ENCODE measurements at regions of chr18 and their contacts with region 1.

Region 1: DNA sequence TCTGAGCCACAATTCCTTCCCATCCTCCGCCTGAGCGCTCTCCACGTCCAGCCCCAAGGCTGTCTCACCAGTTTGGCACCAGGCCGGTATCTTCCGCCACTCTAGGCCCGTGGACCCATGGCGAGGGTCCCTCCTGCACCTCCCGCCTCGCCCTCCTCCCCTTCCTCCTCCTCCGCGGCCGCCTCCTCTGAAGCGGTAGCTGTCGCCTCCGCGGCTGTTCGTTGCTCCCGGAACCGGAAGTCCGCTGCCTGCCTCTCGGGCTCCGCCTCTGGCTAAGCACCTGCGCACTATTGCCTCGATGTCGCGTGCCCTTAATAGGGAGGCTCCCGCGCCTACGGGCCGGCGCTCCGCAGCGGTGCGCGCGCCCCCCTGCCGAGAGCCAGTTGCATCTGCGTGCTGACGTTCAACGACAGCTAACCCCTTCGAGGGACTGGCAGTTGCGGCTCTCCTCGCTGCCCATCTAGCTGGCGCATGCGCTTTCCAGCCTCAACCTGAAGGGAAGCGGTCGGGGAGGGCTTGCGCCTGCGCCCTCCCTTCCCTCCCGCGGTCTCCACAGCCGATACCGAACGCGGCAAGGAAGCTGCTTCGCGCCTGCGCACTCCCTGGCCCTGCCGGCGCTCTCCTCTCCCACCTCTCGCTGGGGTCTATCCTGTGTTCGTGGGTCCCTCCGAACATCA is at the start of gene MBD1:
- DNase-seq: peak; percentile 90
- ATAC-seq: peak; percentile 94
- H3K4me3 Mint-ChIP-seq: peak within 1 kb of the TSS; percentile 97
- H3K27ac Mint-ChIP-seq: peak within 1 kb of the TSS; percentile 93
- H3K4me1 Mint-ChIP-seq: peaks cover 38% of the 10 kb centered on the region
- H3K27me3 Mint-ChIP-seq: no peaks in the 10 kb centered on the region
- CTCF ChIP-seq: no peak
- total RNA-seq, gene MBD1: 101 and 117 TPM in 2 replicates

Region 2: GRCh38 chr18:49878567-49879270 is 402.7 kb before region 1 on chr18:
- CTCF ChIA-PET with region 1: no interaction called
- POLR2A ChIA-PET with region 1: no interaction called
- intact Hi-C with region 1: no loop called
- DNase-seq: no peak
- ATAC-seq: no peak
- H3K4me3 Mint-ChIP-seq: no peak overlapping the region
- H3K27ac Mint-ChIP-seq: no peak overlapping the region
- H3K4me1 Mint-ChIP-seq: no peaks in the 10 kb centered on the region
- H3K27me3 Mint-ChIP-seq: peaks cover 12% of the 10 kb centered on the region
- CTCF ChIP-seq: no peak

Region 3: DNA sequence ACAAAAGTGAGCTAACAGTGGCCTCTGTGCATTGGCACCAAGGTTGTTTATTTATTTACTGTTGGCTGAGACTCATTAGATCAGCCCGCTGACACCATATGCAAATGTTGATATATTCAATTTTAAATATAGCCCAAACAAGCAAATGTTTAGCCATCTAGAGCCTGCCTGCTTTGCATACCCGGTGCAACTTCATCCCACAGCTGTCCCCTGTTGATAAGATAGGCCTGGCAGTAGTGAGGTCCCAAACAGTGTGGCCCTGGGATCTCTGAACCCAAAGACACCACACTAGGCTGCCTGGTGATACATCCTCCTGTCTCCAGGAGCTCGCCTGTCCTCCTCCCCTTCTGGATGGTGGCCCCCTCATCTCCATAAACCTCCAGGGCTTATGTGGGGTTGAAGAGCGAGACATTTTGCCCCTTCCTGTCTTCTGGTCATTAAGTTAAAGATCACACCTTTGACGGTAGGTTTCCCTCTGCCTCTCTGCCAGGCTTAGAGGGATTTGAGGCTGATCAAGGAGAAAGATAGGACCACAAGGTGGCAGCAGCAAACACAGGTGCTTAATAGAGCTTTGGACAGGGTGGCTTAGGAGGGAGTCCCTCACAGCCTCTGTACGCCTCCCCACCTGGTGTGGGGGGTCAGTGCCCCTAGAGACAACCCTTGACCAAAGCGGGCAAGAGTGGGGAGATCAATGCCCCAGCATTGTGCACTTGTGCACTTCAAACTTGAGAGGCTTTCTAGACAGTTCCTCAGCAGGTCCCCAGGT is 62.8 kb before region 1 on chr18:
- CTCF ChIA-PET with region 1: interaction called, 4 read pairs
- POLR2A ChIA-PET with region 1: no interaction called
- intact Hi-C with region 1: loop called (anchors 1 kb)
- DNase-seq: peak; percentile 16
- ATAC-seq: peak; percentile 60
- H3K4me3 Mint-ChIP-seq: no peak overlapping the region
- H3K27ac Mint-ChIP-seq: no peak overlapping the region
- H3K4me1 Mint-ChIP-seq: peaks cover 4% of the 10 kb centered on the region
- H3K27me3 Mint-ChIP-seq: peaks cover 25% of the 10 kb centered on the region
- CTCF ChIP-seq: no peak

Region 4: DNA sequence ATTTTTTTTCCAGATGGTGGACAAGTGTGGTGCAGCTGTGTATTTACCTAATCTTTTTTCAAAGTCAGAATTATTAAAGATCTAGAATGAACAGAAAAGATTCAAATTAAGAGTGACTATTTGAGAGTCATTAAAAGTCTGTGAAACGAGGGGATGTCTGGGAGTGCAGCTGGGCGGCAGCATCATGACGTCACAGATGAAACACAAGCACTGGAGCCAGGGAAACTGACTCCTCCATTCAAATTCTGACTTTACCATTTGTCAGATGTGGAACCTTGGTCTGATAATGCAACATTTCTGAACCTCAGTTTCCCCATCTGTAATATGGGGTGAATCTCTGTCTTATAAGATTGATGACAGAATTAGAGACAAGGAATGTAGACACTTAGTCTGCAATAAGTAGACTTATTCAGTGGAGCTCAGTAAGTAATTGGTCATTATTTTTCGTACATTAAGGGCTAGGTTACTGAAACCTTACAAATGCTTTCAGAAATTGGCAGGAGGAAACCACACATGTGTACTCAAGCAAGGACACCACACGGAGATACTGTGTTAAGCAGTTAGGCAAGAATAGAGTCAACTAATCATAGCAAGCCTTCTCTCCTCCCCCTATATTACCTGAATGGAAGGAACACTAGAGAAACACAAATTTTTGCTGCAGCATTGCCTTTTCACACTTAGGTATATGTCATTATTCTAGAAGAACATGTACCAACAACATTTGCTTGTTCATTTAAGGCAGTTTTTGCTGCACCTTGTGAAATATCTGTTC is 33.9 kb after region 1 on chr18:
- CTCF ChIA-PET with region 1: no interaction called
- POLR2A ChIA-PET with region 1: interaction called, 3 read pairs
- intact Hi-C with region 1: loop called (anchors 1 kb)
- DNase-seq: no peak
- ATAC-seq: peak; percentile 78
- H3K4me3 Mint-ChIP-seq: peak overlapping the region; percentile 42
- H3K27ac Mint-ChIP-seq: peak overlapping the region; percentile 19
- H3K4me1 Mint-ChIP-seq: peaks cover 69% of the 10 kb centered on the region
- H3K27me3 Mint-ChIP-seq: no peaks in the 10 kb centered on the region
- CTCF ChIP-seq: no peak

Region 5: DNA sequence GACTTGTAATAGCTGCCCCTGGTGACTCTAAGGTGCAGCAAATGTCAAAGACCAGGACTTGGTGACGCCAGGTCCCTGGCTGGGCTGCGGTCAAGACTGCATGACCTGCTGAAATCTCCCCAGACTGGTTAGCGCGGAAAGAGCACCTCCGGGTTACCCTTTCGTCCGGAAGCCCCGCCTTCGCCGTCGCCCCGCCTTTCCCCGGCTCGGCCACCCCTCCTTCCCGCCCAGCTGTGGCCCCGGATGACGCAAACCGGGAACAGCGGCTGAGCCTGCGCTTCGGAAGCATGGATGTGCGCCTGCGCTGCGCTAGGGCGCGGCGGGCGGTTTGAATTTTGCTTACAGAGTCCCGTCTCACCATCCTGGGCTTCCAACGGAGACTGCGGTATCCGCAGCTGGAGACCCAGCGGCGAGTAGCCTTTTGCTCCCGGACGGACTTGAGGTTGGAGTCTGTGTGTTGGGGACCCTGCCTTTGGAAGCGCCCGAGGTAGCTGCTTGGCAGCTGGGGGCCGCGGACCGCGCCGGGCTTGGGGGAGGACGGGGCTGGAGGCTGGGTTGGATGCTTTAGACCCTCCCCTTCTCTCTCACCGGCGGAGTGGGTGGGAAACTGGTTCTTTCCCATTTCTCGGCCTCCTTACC is 93.4 kb after region 1 on chr18 and contains the start of gene SKA1:
- CTCF ChIA-PET with region 1: interaction called, 3 read pairs
- POLR2A ChIA-PET with region 1: interaction called, 13 read pairs
- intact Hi-C with region 1: loop called (anchors 1 kb)
- DNase-seq: peak; percentile 85
- ATAC-seq: peak; percentile 100
- H3K4me3 Mint-ChIP-seq: peak within 1 kb of the TSS; percentile 83
- H3K27ac Mint-ChIP-seq: peak within 1 kb of the TSS; percentile 84
- H3K4me1 Mint-ChIP-seq: peaks cover 14% of the 10 kb centered on the region
- H3K27me3 Mint-ChIP-seq: peaks cover 6% of the 10 kb centered on the region
- CTCF ChIP-seq: no peak
- total RNA-seq, gene SKA1: 0.71 and 1.0 TPM in 2 replicates